ENCODE measurements at regions of chr3 and their contacts with region 1.

Region 1: GRCh38 chr3:33113772-33114621 is at the start of gene CRTAP:
- DNase-seq: peak; percentile 98
- H3K4me3 ChIP-seq: peak within 1 kb of the TSS; percentile 55 to 70 (median 67)
- H3K27ac ChIP-seq: peak within 1 kb of the TSS; percentile 28
- H3K4me1 ChIP-seq: peaks cover 19% of the 10 kb centered on the region
- H3K27me3 ChIP-seq: no peaks in the 10 kb centered on the region
- CTCF ChIP-seq: no peak
- POLR2A ChIP-seq: peak; percentile 78
- total RNA-seq, gene CRTAP: 198 and 204 TPM in 2 replicates

Region 2: GRCh38 chr3:32947789-32948238 is 166.2 kb before region 1 on chr3:
- CTCF ChIA-PET with region 1: interaction called, 3 read pairs
- POLR2A ChIA-PET with region 1: no interaction called
- dilution Hi-C with region 1: no loop called
- intact Hi-C with region 1: loop called (anchors 1 kb)
- DNase-seq: peak; percentile 85
- H3K4me3 ChIP-seq: no peak overlapping the region
- H3K27ac ChIP-seq: no peak overlapping the region
- H3K4me1 ChIP-seq: peaks cover 5% of the 10 kb centered on the region
- H3K27me3 ChIP-seq: no peaks in the 10 kb centered on the region
- CTCF ChIP-seq: peak; percentile 73 to 84
- POLR2A ChIP-seq: no peak

Region 3: GRCh38 chr3:33001889-33002288 is 112.1 kb before region 1 on chr3:
- CTCF ChIA-PET with region 1: no interaction called
- POLR2A ChIA-PET with region 1: no interaction called
- dilution Hi-C with region 1: no loop called
- intact Hi-C with region 1: no loop called
- DNase-seq: no peak
- H3K4me3 ChIP-seq: no peak overlapping the region
- H3K27ac ChIP-seq: no peak overlapping the region
- H3K4me1 ChIP-seq: no peaks in the 10 kb centered on the region
- H3K27me3 ChIP-seq: no peaks in the 10 kb centered on the region
- CTCF ChIP-seq: no peak
- POLR2A ChIP-seq: no peak

Region 4: DNA sequence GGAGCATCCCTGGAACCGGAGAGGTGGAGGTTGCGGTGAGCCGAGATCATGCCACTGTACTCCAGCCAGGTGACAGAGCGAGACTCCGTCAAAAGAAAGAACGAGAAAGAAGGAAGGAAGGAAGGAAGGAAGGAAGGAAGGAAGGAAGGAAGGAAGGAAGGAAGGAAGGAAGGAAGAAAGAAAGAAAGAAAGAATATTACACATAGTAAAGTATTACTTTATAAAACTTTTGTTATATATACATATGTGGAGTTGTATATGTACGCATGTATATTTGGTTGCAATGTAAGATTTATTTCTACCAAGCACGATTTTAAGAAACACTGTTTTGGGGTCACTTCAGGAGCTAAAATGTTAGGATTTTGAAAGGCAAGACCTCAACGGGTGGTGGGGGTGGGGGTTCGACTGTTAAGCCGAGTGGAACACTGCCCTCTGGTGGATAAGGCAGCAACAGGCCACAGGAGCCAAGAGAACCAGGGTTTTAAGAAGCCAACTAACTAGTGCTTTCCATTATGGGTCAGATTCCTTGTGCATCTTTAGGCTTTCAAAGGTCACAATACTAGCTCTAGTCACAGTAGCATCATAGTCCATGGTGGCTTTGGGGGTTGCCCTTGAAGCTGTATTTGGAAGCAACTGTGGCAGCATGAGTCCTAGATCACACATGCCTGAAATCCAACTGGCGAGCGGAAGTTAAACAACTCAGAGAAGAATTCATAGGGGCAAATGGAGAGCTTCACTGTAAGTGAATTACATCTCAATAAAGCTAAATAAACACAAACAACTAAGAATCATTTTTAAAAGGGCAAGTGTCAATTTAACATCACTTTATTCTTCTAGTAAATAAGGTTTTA is 39.6 kb before region 1 on chr3:
- CTCF ChIA-PET with region 1: interaction called, 3 read pairs
- POLR2A ChIA-PET with region 1: no interaction called
- dilution Hi-C with region 1: no loop called
- intact Hi-C with region 1: loop called (anchors 1 kb)
- DNase-seq: peak; percentile 72
- H3K4me3 ChIP-seq: no peak overlapping the region
- H3K27ac ChIP-seq: no peak overlapping the region
- H3K4me1 ChIP-seq: no peaks in the 10 kb centered on the region
- H3K27me3 ChIP-seq: no peaks in the 10 kb centered on the region
- CTCF ChIP-seq: peak; percentile 93
- POLR2A ChIP-seq: no peak

Region 5: GRCh38 chr3:33096093-33096868 is 17.7 kb before region 1 on chr3:
- CTCF ChIA-PET with region 1: interaction called, 19 read pairs
- POLR2A ChIA-PET with region 1: interaction called, 4 read pairs
- dilution Hi-C with region 1: no loop called
- intact Hi-C with region 1: loop called (anchors 1 kb)
- DNase-seq: peak; percentile 38
- H3K4me3 ChIP-seq: peak overlapping the region; percentile 90 to 98 (median 95)
- H3K27ac ChIP-seq: peak overlapping the region; percentile 73
- H3K4me1 ChIP-seq: peaks cover 6% of the 10 kb centered on the region
- H3K27me3 ChIP-seq: no peaks in the 10 kb centered on the region
- CTCF ChIP-seq: no peak
- POLR2A ChIP-seq: no peak